Gastrocnemius medialis (tissue), 4 donors: ENCODE measurements at regions of chr1 and their contacts with region 1.

Region 1: DNA sequence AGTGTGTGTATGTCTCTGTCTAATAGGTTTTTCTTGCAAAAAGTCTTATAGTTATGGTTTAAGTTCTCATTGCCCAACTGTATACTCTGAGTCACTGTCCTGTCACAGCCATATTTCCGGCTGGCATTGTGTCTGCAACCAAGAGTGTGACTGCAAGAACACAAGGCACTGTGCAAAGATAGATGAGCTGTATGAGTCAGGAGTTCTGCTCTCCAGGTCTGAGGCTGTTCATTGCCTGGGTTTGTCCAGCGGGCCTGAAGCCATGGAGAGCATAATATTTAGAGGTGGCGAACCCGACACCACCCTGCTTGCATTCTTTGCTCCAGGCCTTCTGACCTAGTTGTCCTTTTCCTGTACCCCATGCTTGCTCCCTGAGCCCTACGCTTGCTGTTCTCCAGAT is 50.9 kb upstream of the CNIH3 start:
- DNase-seq: peak; percentile 91 to 94
- ATAC-seq: peak; percentile 97 to 99
- H3K4me3 ChIP-seq: no peak overlapping the region
- H3K27ac ChIP-seq: peak overlapping the region; percentile 73 to 94 (median 82)
- H3K4me1 ChIP-seq: peaks cover 23 to 34% of the 10 kb centered on the region in 2 donors
- H3K27me3 ChIP-seq: no peaks in the 10 kb centered on the region
- CTCF ChIP-seq: no peak
- POLR2A ChIP-seq: no peak

Region 2: DNA sequence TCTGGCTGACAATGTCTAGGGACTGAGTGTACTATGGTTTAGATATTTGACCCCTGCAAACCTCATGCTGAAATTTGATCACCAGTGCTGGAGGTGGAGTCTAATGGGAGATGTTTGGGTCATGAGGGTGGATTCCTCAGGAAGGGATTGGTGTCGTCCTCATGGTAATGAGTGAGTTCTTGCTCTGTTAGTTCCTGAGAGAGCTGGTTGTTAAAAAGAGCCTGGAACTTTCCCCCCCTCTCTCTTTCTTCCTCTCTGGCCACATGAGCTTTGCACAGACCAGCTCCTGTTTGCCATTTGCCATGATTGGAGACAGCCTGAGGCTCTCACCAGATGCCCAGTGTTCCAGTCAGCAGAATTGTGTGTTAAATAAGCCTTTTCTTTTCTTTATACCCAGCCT is 14.3 kb after region 1 on chr1:
- in situ Hi-C with region 1: no loop called
- intact Hi-C with region 1: loop called (anchors 1 kb)
- DNase-seq: peak; percentile 72 to 73
- ATAC-seq: peak; percentile 99 to 100
- H3K4me3 ChIP-seq: no peak overlapping the region
- H3K27ac ChIP-seq: peak overlapping the region; percentile 74 to 85 (median 84)
- H3K4me1 ChIP-seq: peaks cover 7 to 26% of the 10 kb centered on the region in 2 donors
- H3K27me3 ChIP-seq: no peaks in the 10 kb centered on the region
- CTCF ChIP-seq: no peak
- POLR2A ChIP-seq: peak in 1 of 2 donors; percentile 35

Region 3: DNA sequence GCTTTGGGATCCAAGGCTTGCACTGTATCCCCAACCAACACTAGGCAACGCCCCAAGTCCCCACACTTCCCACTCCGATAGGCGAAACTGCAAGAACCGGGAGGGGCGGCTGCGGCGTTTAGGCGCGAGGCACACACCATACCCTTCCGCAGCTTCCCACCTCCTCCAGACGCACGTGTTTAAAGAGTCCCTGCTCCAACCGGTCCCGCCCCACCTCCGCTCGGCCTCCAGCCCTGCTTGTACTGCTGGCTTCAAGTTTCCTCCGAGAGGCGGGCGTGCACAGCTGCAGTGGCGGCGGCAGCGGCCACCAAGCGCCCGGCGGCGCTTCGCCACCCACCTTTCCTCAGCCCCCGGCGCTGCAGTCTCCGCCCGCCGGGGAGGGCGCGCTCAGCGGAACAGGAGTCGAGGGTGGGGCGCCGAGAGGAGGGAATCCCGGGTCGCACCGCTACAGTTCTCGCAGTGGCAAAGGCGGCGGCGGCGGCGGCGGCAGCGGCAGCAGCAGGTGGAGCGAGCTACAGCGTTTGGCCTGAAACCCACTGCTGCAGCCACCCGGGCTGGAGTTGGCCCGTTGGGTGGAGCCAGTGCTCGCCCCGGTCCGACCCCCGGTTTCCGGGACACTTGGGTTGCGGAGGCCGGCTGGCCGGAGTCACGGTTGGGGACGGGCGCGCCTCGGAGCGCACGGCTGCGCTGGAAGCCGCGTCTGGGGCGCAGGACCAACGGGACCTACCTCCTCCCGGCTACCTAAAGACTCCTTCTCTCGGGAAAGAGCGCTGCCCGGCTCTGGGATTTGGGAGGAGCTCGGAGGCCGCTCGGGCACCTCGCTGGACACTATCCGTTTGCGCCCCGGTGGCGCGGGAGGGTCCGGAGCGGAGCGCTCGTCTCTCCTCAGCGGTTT is 50.9 kb after region 1 on chr1 and contains the start of gene CNIH3:
- in situ Hi-C with region 1: no loop called
- intact Hi-C with region 1: loop called (anchors 2 kb)
- DNase-seq: peak; percentile 34 to 55
- ATAC-seq: peak; percentile 68 to 88
- H3K4me3 ChIP-seq: peak within 1 kb of the TSS; percentile 58 to 65 (median 64)
- H3K27ac ChIP-seq: peak within 1 kb of the TSS in 2 of 4 donors; percentile 11 to 31
- H3K4me1 ChIP-seq: peaks cover 12 to 18% of the 10 kb centered on the region in 2 donors
- H3K27me3 ChIP-seq: peaks cover 34 to 44% (median 34%) of the 10 kb centered on the region in 3 donors
- CTCF ChIP-seq: peak in 1 of 5 experiments; percentile 16
- POLR2A ChIP-seq: peak in 1 of 2 donors; percentile 33
- total RNA-seq, gene CNIH3: 0.95 to 1.6 (median 1.5) TPM in 3 of 4 donors, not detected in the other